CD4-positive, alpha-beta memory T cell (primary cell): ENCODE measurements at regions of chr2 and their contacts with region 1.

Region 1: GRCh38 chr2:58812771-58813344 is 571.7 kb upstream of the FANCL start:
- DNase-seq: no peak
- H3K4me3 ChIP-seq: no peak overlapping the region
- H3K4me3 Mint-ChIP-seq: no peak overlapping the region
- H3K27ac ChIP-seq: no peak overlapping the region
- H3K27ac Mint-ChIP-seq: no peak overlapping the region
- H3K4me1 ChIP-seq: no peaks in the 10 kb centered on the region
- H3K4me1 Mint-ChIP-seq: no peaks in the 10 kb centered on the region
- H3K27me3 ChIP-seq: no peaks in the 10 kb centered on the region
- H3K27me3 Mint-ChIP-seq: no peaks in the 10 kb centered on the region

Region 2: GRCh38 chr2:58834404-58834803 is 21.5 kb after region 1 on chr2:
- CTCF ChIA-PET with region 1: no interaction called
- POLR2A ChIA-PET with region 1: no interaction called
- intact Hi-C with region 1: loop called (anchors 2 kb)
- DNase-seq: no peak
- H3K4me3 ChIP-seq: no peak overlapping the region
- H3K4me3 Mint-ChIP-seq: no peak overlapping the region
- H3K27ac ChIP-seq: no peak overlapping the region
- H3K27ac Mint-ChIP-seq: no peak overlapping the region
- H3K4me1 ChIP-seq: no peaks in the 10 kb centered on the region
- H3K4me1 Mint-ChIP-seq: no peaks in the 10 kb centered on the region
- H3K27me3 ChIP-seq: no peaks in the 10 kb centered on the region
- H3K27me3 Mint-ChIP-seq: no peaks in the 10 kb centered on the region

Region 3: GRCh38 chr2:59025157-59025757 is 212.4 kb after region 1 on chr2:
- CTCF ChIA-PET with region 1: no interaction called
- POLR2A ChIA-PET with region 1: no interaction called
- intact Hi-C with region 1: no loop called
- DNase-seq: no peak
- H3K4me3 ChIP-seq: no peak overlapping the region
- H3K4me3 Mint-ChIP-seq: no peak overlapping the region
- H3K27ac ChIP-seq: no peak overlapping the region
- H3K27ac Mint-ChIP-seq: no peak overlapping the region
- H3K4me1 ChIP-seq: no peaks in the 10 kb centered on the region
- H3K4me1 Mint-ChIP-seq: no peaks in the 10 kb centered on the region
- H3K27me3 ChIP-seq: no peaks in the 10 kb centered on the region
- H3K27me3 Mint-ChIP-seq: peaks cover 0 to 1% of the 10 kb centered on the region in 2 donors